Activated CD8-positive, alpha-beta T cell treated with anti-CD3 and anti-CD28 coated beads, Interleukin-2, amount 10 ng/mL, durations not matched to agents 7 days and 5 days (primary cell): ENCODE measurements at regions of chr6 and their contacts with region 1.

Region 1: DNA sequence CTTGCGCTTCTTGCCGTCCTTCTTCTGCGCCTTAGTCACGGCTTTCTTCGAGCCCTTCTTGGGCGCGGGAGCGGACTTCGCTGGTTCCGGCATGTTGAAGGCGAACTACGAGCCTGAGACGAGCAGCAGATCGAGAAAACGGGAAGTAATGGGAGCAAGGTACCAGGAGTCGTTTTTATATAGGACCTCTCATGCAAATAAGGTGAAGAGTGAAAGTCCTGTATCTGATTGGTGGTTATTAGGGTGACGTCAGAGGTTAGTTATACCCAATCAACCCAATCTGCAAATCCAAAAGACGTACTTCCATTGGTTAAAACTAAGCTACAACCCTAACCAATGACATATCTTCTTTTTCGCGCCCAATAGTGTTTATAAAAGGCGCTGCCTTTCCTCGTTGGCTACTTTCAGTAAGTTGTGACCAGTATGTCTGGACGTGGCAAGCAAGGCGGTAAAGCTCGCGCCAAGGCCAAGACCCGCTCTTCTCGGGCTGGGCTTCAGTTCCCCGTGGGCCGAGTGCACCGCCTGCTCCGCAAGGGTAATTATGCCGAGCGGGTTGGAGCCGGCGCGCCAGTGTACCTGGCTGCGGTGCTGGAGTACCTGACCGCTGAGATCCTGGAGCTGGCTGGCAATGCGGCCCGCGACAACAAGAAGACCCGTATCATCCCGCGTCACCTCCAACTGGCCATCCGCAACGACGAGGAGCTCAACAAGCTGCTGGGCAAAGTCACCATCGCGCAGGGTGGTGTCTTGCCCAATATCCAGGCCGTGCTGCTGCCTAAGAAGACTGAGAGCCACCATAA is 100.6 kb upstream of the PRSS16 start:
- DNase-seq: peak; percentile 91
- ATAC-seq: peak; percentile 64
- H3K4me3 Mint-ChIP-seq: no peak overlapping the region
- H3K27ac Mint-ChIP-seq: no peak overlapping the region
- H3K4me1 Mint-ChIP-seq: peaks cover 35% of the 10 kb centered on the region
- H3K27me3 Mint-ChIP-seq: no peaks in the 10 kb centered on the region

Region 2: GRCh38 chr6:26031595-26032339 is 1115.1 kb before region 1 on chr6:
- CTCF ChIA-PET with region 1: no interaction called
- POLR2A ChIA-PET with region 1: interaction called, 43 read pairs
- DNase-seq: peak; percentile 97
- ATAC-seq: peak; percentile 66
- H3K4me3 Mint-ChIP-seq: peak overlapping the region; percentile 93
- H3K27ac Mint-ChIP-seq: peak overlapping the region; percentile 99
- H3K4me1 Mint-ChIP-seq: peaks cover 68% of the 10 kb centered on the region
- H3K27me3 Mint-ChIP-seq: peaks cover 3% of the 10 kb centered on the region

Region 3: GRCh38 chr6:26183581-26184366 is 963.1 kb before region 1 on chr6:
- CTCF ChIA-PET with region 1: no interaction called
- POLR2A ChIA-PET with region 1: interaction called, 15 read pairs
- DNase-seq: peak; percentile 80
- ATAC-seq: peak; percentile 80
- H3K4me3 Mint-ChIP-seq: peak overlapping the region; percentile 83
- H3K27ac Mint-ChIP-seq: peak overlapping the region; percentile 97
- H3K4me1 Mint-ChIP-seq: peaks cover 79% of the 10 kb centered on the region
- H3K27me3 Mint-ChIP-seq: no peaks in the 10 kb centered on the region

Region 4: GRCh38 chr6:26285143-26286134 is 861.5 kb before region 1 on chr6:
- CTCF ChIA-PET with region 1: no interaction called
- POLR2A ChIA-PET with region 1: interaction called, 26 read pairs
- DNase-seq: peak; percentile 99
- ATAC-seq: peak; percentile 79
- H3K4me3 Mint-ChIP-seq: peak overlapping the region; percentile 93
- H3K27ac Mint-ChIP-seq: peak overlapping the region; percentile 95
- H3K4me1 Mint-ChIP-seq: peaks cover 42% of the 10 kb centered on the region
- H3K27me3 Mint-ChIP-seq: peaks cover 2% of the 10 kb centered on the region

Region 5: DNA sequence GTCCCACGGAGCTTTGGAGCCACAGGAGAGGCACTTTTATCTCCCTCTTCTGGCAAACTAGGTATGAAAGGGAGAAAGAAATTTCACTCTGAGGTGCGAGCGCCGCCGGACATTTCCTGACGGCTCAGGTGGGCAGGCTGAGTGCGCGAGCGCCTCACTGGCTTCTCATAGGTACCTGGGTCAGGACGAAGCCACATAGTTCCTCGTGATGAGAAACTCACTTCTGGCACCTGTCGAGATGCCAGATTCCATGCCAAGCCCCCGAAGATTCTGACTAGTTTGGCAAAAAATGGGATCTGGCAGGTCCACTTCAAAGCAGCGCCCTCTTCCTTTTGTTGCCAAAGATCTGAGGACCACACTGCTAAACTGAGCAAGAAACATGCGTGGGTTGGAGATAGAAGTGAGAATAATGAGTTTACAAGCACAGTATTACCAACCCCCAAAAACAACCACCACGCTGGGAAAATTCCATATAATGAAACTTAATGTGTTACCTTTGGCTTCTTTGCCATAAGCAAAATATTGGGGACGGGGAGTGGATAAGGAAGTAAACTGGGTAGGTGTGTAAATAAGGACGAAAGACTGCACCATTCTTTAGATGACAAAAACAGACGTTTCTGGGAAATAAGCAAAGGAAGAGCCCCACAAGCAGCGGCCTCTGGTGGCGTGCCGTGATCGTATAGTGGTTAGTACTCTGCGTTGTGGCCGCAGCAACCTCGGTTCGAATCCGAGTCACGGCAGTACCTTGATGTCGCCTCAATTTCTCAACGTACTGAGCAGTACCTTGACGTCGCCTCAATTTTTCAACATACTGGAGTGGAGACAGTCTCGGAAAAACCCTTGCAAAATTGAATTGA is 10.8 kb after region 1 on chr6:
- CTCF ChIA-PET with region 1: interaction called, 31 read pairs
- POLR2A ChIA-PET with region 1: interaction called, 106 read pairs
- DNase-seq: peak; percentile 87
- ATAC-seq: peak; percentile 79
- H3K4me3 Mint-ChIP-seq: peak overlapping the region; percentile 80
- H3K27ac Mint-ChIP-seq: peak overlapping the region; percentile 75
- H3K4me1 Mint-ChIP-seq: peaks cover 53% of the 10 kb centered on the region
- H3K27me3 Mint-ChIP-seq: no peaks in the 10 kb centered on the region

Region 6: GRCh38 chr6:27795697-27796494 is 649.0 kb after region 1 on chr6:
- CTCF ChIA-PET with region 1: interaction called, 10 read pairs
- POLR2A ChIA-PET with region 1: interaction called, 6 read pairs
- DNase-seq: peak; percentile 83
- ATAC-seq: peak; percentile 52
- H3K4me3 Mint-ChIP-seq: peak overlapping the region; percentile 1
- H3K27ac Mint-ChIP-seq: no peak overlapping the region
- H3K4me1 Mint-ChIP-seq: peaks cover 49% of the 10 kb centered on the region
- H3K27me3 Mint-ChIP-seq: peaks cover 13% of the 10 kb centered on the region

Region 7: DNA sequence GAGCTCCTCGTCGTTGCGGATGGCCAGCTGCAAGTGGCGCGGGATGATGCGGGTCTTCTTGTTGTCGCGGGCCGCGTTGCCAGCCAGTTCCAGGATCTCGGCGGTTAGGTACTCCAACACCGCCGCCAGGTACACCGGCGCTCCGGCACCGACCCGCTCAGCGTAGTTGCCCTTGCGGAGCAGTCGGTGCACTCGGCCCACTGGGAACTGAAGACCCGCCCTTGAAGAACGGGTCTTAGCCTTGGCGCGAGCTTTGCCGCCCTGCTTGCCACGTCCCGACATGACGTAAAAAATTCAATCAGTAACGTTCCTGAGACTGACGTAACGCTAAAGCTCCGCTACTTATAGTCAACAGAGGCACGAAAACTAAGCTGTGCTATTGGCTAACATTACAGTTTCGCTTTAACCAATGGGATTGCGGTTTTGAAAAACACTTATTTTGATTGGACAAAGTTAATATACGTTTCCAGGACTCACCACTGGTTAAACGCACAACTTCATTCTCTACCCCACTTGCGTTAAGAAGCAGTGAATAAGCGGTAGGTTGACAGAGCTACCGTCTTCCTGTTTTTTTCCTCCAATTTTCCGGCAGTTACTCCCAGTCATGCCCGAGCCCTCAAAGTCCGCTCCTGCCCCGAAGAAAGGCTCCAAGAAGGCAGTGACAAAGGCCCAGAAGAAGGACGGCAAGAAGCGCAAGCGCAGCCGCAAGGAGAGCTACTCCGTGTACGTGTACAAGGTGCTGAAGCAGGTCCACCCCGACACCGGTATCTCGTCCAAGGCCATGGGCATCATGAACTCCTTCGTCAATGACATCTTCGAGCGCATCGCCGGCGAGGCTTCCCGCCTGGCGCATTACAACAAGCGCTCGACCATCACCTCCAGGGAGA is 691.4 kb after region 1 on chr6:
- CTCF ChIA-PET with region 1: no interaction called
- POLR2A ChIA-PET with region 1: interaction called, 74 read pairs
- DNase-seq: peak; percentile 92
- ATAC-seq: peak; percentile 78
- H3K4me3 Mint-ChIP-seq: no peak overlapping the region
- H3K27ac Mint-ChIP-seq: no peak overlapping the region
- H3K4me1 Mint-ChIP-seq: peaks cover 33% of the 10 kb centered on the region
- H3K27me3 Mint-ChIP-seq: no peaks in the 10 kb centered on the region